ENCODE measurements at regions of chr11 and their contacts with region 1.

Region 1: GRCh38 chr11:118353084-118353710 is 6.2 kb upstream of the UBE4A start:
- DNase-seq: no peak
- ATAC-seq: no peak
- H3K4me3 ChIP-seq: no peak overlapping the region
- H3K27ac ChIP-seq: no peak overlapping the region
- H3K4me1 ChIP-seq: no peaks in the 10 kb centered on the region
- H3K27me3 ChIP-seq: no peaks in the 10 kb centered on the region
- CTCF ChIP-seq: peak in 3 of 4 donors; percentile 15 to 39 (median 37)

Region 2: GRCh38 chr11:118088477-118088920 is 264.7 kb before region 1 on chr11:
- intact Hi-C with region 1: no loop called
- DNase-seq: no peak
- ATAC-seq: peak in 3 of 4 donors; percentile 69 to 84 (median 72)
- H3K4me3 ChIP-seq: no peak overlapping the region
- H3K27ac ChIP-seq: no peak overlapping the region
- H3K4me1 ChIP-seq: no peaks in the 10 kb centered on the region
- H3K27me3 ChIP-seq: no peaks in the 10 kb centered on the region
- CTCF ChIP-seq: no peak

Region 3: DNA sequence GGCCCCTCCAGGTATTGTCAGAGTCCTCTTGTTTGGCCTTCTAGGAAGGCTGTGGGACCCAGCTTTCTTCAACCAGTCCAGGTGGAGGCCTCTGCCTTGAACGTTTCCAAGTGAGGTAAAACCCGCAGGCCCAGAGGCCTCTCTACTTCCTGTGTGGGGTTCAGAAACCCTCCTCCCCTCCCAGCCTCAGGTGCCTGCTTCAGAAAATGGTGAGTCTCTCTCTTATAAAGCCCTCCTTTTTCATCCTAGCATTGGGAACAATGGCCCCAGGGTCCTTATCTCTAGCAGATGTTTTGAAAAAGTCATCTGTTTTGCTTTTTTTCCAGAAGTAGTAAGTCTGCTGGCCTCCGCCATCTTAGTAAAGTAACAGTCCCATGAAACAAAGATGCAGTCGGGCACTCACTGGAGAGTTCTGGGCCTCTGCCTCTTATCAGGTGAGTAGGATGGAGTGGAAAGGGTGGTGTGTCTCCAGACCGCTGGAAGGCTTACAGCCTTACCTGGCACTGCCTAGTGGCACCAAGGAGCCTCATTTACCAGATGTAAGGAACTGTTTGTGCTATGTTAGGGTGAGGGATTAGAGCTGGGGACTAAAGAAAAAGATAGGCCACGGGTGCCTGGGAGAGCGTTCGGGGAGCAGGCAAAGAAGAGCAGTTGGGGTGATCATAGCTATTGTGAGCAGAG is 48.5 kb before region 1 on chr11 and contains the start of gene CD3E:
- intact Hi-C with region 1: loop called in 1 of 3 experiments (anchors 5 kb)
- DNase-seq: no peak
- ATAC-seq: no peak
- H3K4me3 ChIP-seq: no peak within 1 kb of the TSS
- H3K27ac ChIP-seq: no peak within 1 kb of the TSS
- H3K4me1 ChIP-seq: no peaks in the 10 kb centered on the region
- H3K27me3 ChIP-seq: no peaks in the 10 kb centered on the region
- CTCF ChIP-seq: no peak
- total RNA-seq, gene CD3E: 0.23 to 2.1 (median 1.5) TPM